HEK293 (cell line): ENCODE measurements at regions of chr11 and their contacts with region 1.

Region 1: GRCh38 chr11:121063728-121064127 is 37.3 kb upstream of the TECTA start:
- H3K4me3 ChIP-seq: no peak overlapping the region
- H3K27ac ChIP-seq: no peak overlapping the region
- H3K4me1 ChIP-seq: peaks cover 10% of the 10 kb centered on the region; the same call in 1 of the 2 replicates
- CTCF ChIP-seq: no peak

Region 2: DNA sequence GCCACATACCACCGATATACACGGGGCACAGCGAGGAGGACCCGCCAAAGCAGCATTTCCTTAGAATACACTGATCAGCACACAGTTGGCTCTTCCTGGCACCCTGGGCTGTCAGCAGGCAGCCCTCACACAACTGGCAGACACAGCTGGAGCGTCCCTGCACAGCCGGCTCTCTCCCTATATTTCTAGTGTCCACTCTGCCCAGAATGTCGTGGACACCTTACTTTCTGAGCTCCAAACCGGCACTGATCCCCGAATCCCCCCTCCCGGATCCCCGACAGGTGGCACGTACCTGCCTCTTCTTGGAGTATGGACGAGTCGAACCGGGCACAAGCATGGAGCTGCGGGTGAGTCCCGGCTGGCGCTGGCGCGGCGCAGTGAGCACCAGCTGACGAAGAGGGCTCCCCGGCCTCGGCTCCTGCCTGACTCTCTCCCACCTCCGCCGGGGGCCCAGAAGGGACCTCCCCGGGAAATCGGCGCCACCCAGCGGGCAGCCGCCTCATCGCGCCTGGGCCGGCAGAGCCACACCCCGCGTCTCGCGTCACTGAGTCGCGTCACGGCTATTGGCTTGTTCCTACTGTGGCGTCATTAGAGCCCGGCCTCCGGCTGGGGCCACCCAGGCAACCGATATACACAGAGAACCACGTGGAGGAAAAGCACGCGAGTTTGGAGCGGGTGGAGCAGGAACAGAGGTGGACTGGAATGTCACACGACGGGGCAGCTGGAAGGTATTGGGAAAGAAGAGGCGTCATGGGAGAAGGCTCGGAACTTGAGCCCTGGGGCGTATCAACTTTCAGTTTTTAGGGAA is 1682.3 kb before region 1 on chr11 and contains the start of gene USP2:
- CTCF ChIA-PET with region 1: no interaction called
- POLR2A ChIA-PET with region 1: no interaction called
- H3K4me3 ChIP-seq: peak within 1 kb of the TSS; percentile 45
- H3K27ac ChIP-seq: no peak within 1 kb of the TSS
- H3K4me1 ChIP-seq: no peaks in the 10 kb centered on the region; the same call in 1 of the 2 replicates
- CTCF ChIP-seq: peak; percentile 95

Region 3: GRCh38 chr11:120738516-120739046 is 325.1 kb before region 1 on chr11:
- CTCF ChIA-PET with region 1: no interaction called
- POLR2A ChIA-PET with region 1: no interaction called
- H3K4me3 ChIP-seq: no peak overlapping the region
- H3K27ac ChIP-seq: no peak overlapping the region
- H3K4me1 ChIP-seq: no peaks in the 10 kb centered on the region
- CTCF ChIP-seq: no peak

Region 4: DNA sequence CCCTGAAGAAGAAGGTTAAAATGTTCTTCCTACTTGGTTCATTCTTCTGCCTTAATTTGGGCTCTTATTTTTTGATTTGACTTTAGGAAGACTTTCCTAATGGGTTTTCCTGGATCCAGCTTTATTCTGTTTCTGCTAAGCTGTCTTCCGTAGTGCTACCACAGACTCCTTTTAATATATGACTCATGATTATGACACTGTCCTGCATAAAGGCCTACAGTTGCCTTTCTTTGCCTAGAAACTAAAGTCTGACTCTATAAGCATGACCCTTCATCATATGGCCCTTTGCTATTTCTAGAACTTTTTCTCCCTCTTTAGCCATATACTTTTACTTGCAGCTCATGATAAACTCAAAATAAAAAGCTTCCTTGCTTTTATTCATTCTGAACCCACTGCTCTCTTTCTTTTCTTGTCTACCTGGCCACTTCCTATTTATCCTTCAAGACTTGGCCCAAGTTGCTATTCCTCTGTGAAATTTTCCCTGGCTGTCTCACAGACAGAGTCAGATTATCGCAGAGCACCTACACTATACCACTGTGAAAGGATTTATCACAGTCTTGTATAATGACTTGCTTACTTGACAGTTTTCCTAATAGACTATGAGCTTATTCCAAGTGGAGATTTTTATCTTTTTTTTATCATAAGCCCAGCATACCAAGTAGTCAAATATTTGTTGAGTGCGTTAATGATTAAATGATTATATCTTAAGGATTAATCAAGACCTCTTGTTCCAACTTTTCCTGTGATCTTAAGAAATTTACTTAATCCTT is 15.1 kb before region 1 on chr11:
- CTCF ChIA-PET with region 1: interaction called, 12 read pairs
- POLR2A ChIA-PET with region 1: no interaction called
- H3K4me3 ChIP-seq: no peak overlapping the region
- H3K27ac ChIP-seq: no peak overlapping the region
- H3K4me1 ChIP-seq: no peaks in the 10 kb centered on the region
- CTCF ChIP-seq: no peak